Mammary epithelial cell (primary cell): ENCODE measurements at regions of chr3 and their contacts with region 1.

Region 1: GRCh38 chr3:51670823-51671733 is at the start of gene TEX264:
- DNase-seq: peak; percentile 80
- H3K4me3 ChIP-seq: peak within 1 kb of the TSS; percentile 77 to 79 (median 79)
- H3K27ac ChIP-seq: peak within 1 kb of the TSS; percentile 75
- H3K4me1 ChIP-seq: peaks cover 61% of the 10 kb centered on the region
- H3K27me3 ChIP-seq: no peaks in the 10 kb centered on the region
- CTCF ChIP-seq: no peak
- total RNA-seq, gene TEX264: 36.0 to 49.7 TPM

Region 2: GRCh38 chr3:50568947-50569749 is 1101.9 kb before region 1 on chr3 and contains the start of gene HEMK1:
- CTCF ChIA-PET with region 1: interaction called, 19 read pairs
- dilution Hi-C with region 1: no loop called
- in situ Hi-C with region 1: no loop called
- intact Hi-C with region 1: no loop called
- DNase-seq: peak; percentile 89
- H3K4me3 ChIP-seq: peak within 1 kb of the TSS; percentile 86 to 97 (median 93)
- H3K27ac ChIP-seq: peak within 1 kb of the TSS; percentile 73
- H3K4me1 ChIP-seq: peaks cover 16% of the 10 kb centered on the region
- H3K27me3 ChIP-seq: no peaks in the 10 kb centered on the region
- CTCF ChIP-seq: no peak
- total RNA-seq, gene HEMK1: 14.2 to 23.1 TPM

Region 3: DNA sequence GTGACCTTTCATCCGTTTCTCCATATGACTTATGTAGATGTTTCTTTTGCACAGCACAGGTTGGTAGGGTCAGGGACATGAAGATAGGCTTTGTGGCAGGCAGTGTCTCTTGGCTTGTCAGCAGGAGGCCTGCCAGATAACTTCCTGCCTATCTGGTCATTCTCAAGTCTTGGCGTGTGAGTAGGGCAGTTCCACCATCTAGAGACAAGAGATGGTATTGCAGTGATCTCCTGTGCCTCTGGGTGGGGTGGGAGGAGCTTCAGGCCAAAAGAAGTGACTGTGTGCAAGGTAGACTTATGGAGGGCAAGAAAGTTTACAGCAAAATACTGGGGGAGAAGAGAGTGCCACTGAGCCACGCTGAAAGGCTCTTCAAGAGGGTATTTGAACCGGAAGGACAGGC is 11.0 kb after region 1 on chr3:
- CTCF ChIA-PET with region 1: interaction called, 30 read pairs
- dilution Hi-C with region 1: no loop called
- in situ Hi-C with region 1: no loop called
- intact Hi-C with region 1: loop called (anchors 1 kb)
- DNase-seq: peak; percentile 84
- H3K4me3 ChIP-seq: no peak overlapping the region
- H3K27ac ChIP-seq: peak overlapping the region; percentile 4
- H3K4me1 ChIP-seq: peaks cover 64% of the 10 kb centered on the region
- H3K27me3 ChIP-seq: no peaks in the 10 kb centered on the region
- CTCF ChIP-seq: peak; percentile 92 to 98